ENCODE measurements at regions of chr2 and their contacts with region 1.

Region 1: GRCh38 chr2:147937744-147938349 is 82.7 kb downstream of the ORC4 start:
- DNase-seq: no peak
- H3K4me3 ChIP-seq: no peak overlapping the region
- H3K27ac ChIP-seq: no peak overlapping the region
- H3K4me1 ChIP-seq: no peaks in the 10 kb centered on the region
- H3K27me3 ChIP-seq: no peaks in the 10 kb centered on the region
- CTCF ChIP-seq: peak; percentile 82

Region 2: DNA sequence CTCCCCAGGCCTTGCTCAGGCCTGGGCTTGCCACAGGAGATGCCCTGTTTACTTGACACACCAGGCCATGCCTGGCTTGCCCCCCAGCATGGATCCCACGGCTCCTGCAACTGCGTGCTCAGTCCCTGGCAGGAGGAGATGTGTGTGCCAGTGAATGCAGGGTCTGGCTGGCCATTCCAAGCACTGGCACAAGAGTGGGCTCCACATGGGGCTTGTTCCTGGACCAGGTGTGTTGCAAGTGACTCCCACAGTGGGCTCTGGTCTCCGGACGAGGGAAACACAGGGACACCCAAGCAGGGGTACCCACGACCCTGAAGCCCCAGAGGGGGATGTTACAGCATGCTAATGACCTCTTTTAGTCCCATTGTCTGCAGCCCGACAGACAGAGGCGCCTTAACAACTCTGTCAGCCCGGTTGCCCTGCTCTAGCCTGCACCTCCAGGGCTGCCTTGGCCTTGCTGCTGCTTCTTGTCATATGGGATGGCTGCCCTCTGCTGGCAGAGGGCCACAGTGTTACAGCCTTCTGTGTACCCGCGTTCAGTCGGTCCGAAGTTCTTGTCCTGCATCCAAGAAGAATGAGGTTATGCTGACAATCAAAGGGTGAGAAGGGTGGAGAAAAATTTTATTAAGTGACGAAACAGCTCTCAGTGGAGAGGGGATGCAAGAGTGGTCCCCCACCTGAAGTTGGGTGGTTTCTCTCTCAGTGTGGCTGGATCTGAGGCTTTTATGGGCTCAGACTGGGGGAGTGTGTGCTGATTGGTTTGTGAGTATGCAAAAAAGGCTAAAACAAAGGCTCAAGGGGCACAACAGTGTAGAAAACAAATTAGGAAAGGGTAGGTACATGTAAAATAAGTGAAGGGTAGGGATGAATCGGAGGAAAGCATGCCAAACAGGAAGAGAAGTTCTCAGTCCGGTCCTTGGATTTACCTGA is 263.5 kb after region 1 on chr2:
- intact Hi-C with region 1: loop called (anchors 5 kb)
- DNase-seq: peak; percentile 28
- H3K4me3 ChIP-seq: no peak overlapping the region
- H3K27ac ChIP-seq: no peak overlapping the region
- H3K4me1 ChIP-seq: no peaks in the 10 kb centered on the region
- H3K27me3 ChIP-seq: no peaks in the 10 kb centered on the region
- CTCF ChIP-seq: peak; percentile 47

Region 3: GRCh38 chr2:148509288-148509902 is 571.5 kb after region 1 on chr2:
- intact Hi-C with region 1: loop called (anchors 5 kb)
- DNase-seq: peak; percentile 87
- H3K4me3 ChIP-seq: no peak overlapping the region
- H3K27ac ChIP-seq: no peak overlapping the region
- H3K4me1 ChIP-seq: no peaks in the 10 kb centered on the region
- H3K27me3 ChIP-seq: no peaks in the 10 kb centered on the region
- CTCF ChIP-seq: peak; percentile 66

Region 4: DNA sequence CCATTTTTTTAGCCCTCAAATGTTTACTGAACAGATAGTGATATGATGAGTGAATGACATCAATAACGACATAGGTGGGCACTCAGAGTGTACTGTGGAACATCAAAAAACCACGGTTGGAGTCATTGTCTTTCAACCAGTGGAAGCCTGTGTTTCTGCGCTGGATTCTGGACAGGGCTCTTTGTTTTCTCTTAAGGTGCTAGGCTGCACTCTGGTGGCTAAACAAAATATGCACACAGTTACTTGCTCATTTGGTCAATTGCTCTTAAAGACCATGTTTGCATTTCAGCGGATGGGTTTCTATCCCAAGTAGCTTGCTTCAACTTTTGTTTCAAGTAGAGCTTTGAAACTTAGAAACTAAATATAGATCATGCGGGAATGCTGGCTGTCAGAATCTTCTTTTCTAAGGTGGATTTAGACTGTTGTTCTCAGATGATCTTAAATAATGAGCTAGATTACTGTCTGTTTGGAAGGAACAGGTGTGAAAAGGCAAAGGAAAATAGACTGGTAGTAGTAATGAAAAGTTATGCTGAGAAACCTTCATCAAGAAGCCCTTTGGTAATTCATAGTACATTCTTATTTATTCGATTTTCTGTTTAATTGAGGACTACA is 1052.1 kb after region 1 on chr2:
- intact Hi-C with region 1: loop called (anchors 10 kb)
- DNase-seq: peak; percentile 67
- H3K4me3 ChIP-seq: no peak overlapping the region
- H3K27ac ChIP-seq: no peak overlapping the region
- H3K4me1 ChIP-seq: no peaks in the 10 kb centered on the region
- H3K27me3 ChIP-seq: no peaks in the 10 kb centered on the region
- CTCF ChIP-seq: peak; percentile 59

Measured in colonic mucosa (tissue), 4 donors.